CD8-positive, alpha-beta T cell (primary cell): ENCODE measurements at regions of chr19 and their contacts with region 1.

Region 1: DNA sequence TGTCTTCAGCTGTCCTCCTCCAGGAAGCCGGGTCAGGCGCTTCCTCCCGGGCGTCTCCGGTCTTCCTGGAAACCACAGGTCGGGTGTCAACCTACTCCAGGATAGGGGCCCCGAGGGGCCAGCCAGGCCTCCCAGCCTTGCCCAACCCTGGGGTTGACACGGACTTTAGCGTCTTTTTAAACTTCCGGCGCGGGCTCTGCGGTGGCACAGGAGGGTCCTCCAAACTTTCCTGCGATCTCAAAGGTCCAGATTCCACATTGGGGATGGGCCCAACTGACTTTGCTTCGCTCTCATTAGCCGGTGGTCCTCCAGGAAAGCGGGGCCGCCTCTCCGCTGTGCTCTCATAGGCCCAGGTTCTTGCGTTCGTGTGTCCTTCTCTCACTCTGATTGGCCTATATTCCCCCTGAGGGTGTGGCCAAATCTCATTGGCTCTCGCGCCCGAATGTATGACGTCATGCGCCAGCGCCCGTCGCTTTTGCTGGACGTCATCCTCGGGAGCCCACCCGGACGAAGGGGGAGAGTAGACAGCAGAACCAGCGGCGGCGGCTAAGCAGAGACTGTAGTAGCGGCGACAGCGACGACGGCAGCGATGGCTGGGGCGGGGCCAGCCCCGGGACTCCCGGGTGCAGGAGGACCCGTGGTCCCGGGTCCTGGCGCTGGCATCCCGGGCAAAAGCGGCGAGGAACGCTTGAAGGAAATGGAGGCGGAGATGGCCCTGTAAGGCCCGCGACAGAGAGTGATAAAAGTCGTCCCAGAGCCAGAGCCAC is at the start of gene RBM42:
- DNase-seq: peak; percentile 94 to 99 (median 98)
- ATAC-seq: peak; percentile 99
- H3K4me3 ChIP-seq: peak within 1 kb of the TSS; percentile 90 to 93
- H3K4me3 Mint-ChIP-seq: peak within 1 kb of the TSS; percentile 96
- H3K27ac ChIP-seq: peak within 1 kb of the TSS; percentile 90 to 91
- H3K27ac Mint-ChIP-seq: peak within 1 kb of the TSS; percentile 96
- H3K4me1 ChIP-seq: peaks cover 17% of the 10 kb centered on the region
- H3K4me1 Mint-ChIP-seq: peaks cover 24% of the 10 kb centered on the region
- H3K27me3 ChIP-seq: no peaks in the 10 kb centered on the region
- H3K27me3 Mint-ChIP-seq: no peaks in the 10 kb centered on the region
- CTCF ChIP-seq: no peak
- total RNA-seq, gene RBM42: 49.9 to 51.3 TPM

Region 2: DNA sequence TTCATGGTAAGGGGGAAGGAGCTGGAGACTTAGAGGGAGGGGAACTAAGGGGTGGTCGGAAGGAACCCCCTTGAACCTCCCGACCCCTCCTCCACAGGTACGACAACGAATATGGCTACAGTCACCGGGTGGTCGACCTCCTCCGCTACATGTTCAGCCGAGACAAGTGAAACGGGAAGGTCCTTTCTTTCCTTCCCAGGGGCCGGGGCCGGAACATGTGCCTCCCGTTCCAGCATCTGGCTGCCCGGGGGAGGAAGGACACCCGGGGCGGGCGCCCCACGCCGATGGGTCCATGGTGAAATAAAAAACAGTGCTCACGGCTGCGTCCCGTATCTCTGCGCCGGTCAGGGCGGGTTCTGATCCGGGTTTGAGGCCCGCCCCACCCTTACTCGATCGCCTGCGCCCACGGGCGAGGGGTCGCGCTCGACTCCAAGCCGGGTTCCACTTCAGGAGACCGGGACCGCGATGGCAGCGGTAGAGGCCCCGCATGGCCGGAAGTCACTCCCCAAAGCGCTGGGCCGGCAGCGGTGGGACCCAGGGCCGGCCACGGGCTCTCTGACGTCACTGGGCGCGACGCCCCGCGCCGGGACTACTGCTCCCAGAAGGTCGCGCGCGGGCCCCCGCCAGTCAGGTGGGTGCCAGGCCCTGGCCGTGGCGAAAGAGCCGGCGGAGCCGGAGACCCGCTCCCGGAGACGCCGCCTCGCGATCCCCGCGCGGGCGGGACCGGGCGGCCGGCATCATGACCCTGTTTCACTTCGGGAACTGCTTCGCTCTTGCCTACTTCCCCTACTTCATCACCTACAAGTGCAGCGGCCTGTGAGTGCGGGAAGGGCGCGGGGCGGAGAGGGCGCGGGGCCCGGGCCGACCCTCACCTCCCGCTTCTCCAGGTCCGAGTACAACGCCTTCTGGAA is 83.5 kb before region 1 on chr19 and contains the start of gene TMEM147:
- CTCF ChIA-PET with region 1: no interaction called
- POLR2A ChIA-PET with region 1: no interaction called
- intact Hi-C with region 1: loop called (anchors 1 to 5 kb)
- DNase-seq: peak; percentile 44 to 88 (median 79)
- ATAC-seq: peak; percentile 75
- H3K4me3 ChIP-seq: peak within 1 kb of the TSS; percentile 75 to 81
- H3K4me3 Mint-ChIP-seq: peak within 1 kb of the TSS; percentile 88
- H3K27ac ChIP-seq: peak within 1 kb of the TSS; percentile 79 to 85
- H3K27ac Mint-ChIP-seq: peak within 1 kb of the TSS; percentile 90
- H3K4me1 ChIP-seq: peaks cover 21% of the 10 kb centered on the region
- H3K4me1 Mint-ChIP-seq: peaks cover 35% of the 10 kb centered on the region
- H3K27me3 ChIP-seq: no peaks in the 10 kb centered on the region
- H3K27me3 Mint-ChIP-seq: no peaks in the 10 kb centered on the region
- CTCF ChIP-seq: no peak
- total RNA-seq, gene TMEM147: 22.3 to 27.2 TPM

Region 3: GRCh38 chr19:35612559-35613321 is 16.0 kb before region 1 on chr19 and contains the start of gene HAUS5:
- CTCF ChIA-PET with region 1: no interaction called
- POLR2A ChIA-PET with region 1: interaction called, 3 read pairs
- intact Hi-C with region 1: loop called (anchors 1 kb)
- DNase-seq: peak; percentile 90 to 99 (median 96)
- ATAC-seq: peak; percentile 91
- H3K4me3 ChIP-seq: peak within 1 kb of the TSS; percentile 87 to 91
- H3K4me3 Mint-ChIP-seq: peak within 1 kb of the TSS; percentile 86
- H3K27ac ChIP-seq: peak within 1 kb of the TSS; percentile 78 to 81
- H3K27ac Mint-ChIP-seq: peak within 1 kb of the TSS; percentile 94
- H3K4me1 ChIP-seq: peaks cover 26% of the 10 kb centered on the region
- H3K4me1 Mint-ChIP-seq: peaks cover 35% of the 10 kb centered on the region
- H3K27me3 ChIP-seq: no peaks in the 10 kb centered on the region
- H3K27me3 Mint-ChIP-seq: no peaks in the 10 kb centered on the region
- CTCF ChIP-seq: no peak
- total RNA-seq, gene HAUS5: 24.0 to 27.7 TPM

Region 4: DNA sequence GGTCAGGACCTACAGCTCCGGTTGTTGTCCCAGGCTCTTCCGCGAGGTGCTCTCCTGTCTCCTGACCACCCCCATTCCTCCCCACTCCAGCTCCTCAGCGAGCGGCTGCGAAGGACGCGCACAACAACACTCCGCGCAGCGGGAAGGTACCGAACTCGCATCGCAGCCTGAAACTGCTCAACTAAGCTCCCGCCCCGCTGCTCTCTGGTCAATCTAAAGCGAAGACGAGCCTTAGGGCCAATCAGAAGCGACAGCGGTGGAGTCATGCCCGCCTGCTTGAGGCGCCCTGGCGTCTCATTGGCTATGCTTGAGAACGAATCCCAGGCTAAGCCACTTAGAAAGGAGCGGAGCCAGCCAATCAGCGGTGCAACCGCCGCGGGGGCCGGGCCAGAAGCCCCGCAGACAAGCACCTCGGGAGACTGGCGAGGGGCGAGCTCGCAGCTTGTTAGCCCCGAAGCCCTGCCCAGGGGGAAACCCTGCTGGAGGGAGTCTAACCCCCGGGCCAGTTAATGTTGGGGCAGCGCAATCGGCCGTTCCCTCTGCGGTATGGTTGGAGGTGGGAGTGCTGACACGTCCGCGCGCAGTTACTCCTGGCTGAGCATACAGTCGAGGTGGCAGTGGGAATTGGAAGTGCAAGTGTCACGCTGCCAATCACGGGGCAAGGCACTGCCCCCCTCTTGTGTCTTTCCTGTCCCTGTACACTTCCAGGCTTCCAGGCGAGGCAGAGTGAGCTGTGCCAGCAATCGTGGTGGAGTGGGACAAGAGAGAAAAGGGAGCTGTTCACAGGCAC is 73.7 kb after region 1 on chr19:
- CTCF ChIA-PET with region 1: no interaction called
- POLR2A ChIA-PET with region 1: interaction called, 3 read pairs
- intact Hi-C with region 1: loop called (anchors 1 to 5 kb)
- DNase-seq: peak; percentile 79 to 98 (median 92)
- ATAC-seq: peak; percentile 99
- H3K4me3 ChIP-seq: peak overlapping the region; percentile 71 to 79
- H3K4me3 Mint-ChIP-seq: peak overlapping the region; percentile 92
- H3K27ac ChIP-seq: peak overlapping the region in 1 of 2 experiments; percentile 41
- H3K27ac Mint-ChIP-seq: peak overlapping the region; percentile 92
- H3K4me1 ChIP-seq: peaks cover 4% of the 10 kb centered on the region
- H3K4me1 Mint-ChIP-seq: peaks cover 7% of the 10 kb centered on the region
- H3K27me3 ChIP-seq: no peaks in the 10 kb centered on the region
- H3K27me3 Mint-ChIP-seq: no peaks in the 10 kb centered on the region
- CTCF ChIP-seq: no peak

Region 5: DNA sequence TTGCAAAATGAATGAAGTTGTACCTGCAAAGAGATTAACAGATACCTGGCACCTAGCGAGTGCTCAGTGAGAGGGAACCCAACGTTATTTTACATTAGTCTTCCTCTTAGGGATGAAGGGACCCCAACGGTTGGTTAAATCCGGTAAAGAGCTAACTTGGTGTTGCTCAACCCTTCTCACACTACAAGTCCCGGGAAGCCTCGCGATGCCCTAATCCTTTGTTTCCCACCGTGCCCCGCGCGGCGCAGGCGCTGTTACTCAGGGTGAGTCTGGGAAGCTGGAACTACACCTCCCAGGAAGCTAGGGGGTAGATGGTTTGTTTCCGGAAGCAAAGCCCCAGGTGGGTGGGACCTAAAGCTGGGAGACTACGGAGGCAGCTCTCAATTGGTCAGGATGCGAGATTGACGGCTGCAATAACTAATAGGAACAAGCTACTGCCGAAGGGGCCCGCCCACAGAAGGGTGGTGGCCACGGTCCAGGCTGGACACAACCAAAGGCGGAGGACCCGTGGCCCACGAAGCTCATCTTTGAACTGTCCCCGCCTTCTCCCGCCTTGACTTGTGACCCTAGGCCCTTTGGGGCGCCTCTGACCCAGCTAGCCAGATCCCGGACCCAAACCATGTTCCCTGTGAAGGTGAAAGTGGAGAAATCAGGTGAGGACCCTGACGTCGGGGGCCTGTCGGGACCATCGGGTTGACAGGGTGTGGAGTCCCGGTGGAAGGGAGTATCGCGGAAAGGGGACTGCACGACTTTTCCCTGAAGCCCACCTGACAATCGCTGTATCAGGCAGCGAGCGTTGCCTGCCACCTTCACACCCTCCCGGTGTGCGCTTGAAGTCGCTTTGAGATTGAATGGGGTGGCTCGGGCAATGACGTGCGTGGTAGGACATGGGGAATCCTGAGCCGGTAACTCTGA is 119.6 kb after region 1 on chr19 and contains the start of gene LIN37:
- CTCF ChIA-PET with region 1: no interaction called
- POLR2A ChIA-PET with region 1: no interaction called
- intact Hi-C with region 1: loop called in 1 of 2 experiments (anchors 2 kb)
- DNase-seq: peak; percentile 97 to 100 (median 98)
- ATAC-seq: peak; percentile 72
- H3K4me3 ChIP-seq: peak within 1 kb of the TSS; percentile 84 to 99
- H3K4me3 Mint-ChIP-seq: peak within 1 kb of the TSS; percentile 98
- H3K27ac ChIP-seq: peak within 1 kb of the TSS; percentile 71 to 84
- H3K27ac Mint-ChIP-seq: peak within 1 kb of the TSS; percentile 95
- H3K4me1 ChIP-seq: peaks cover 41% of the 10 kb centered on the region
- H3K4me1 Mint-ChIP-seq: peaks cover 44% of the 10 kb centered on the region
- H3K27me3 ChIP-seq: no peaks in the 10 kb centered on the region
- H3K27me3 Mint-ChIP-seq: no peaks in the 10 kb centered on the region
- CTCF ChIP-seq: no peak
- total RNA-seq, gene LIN37: 5.5 to 9.3 TPM

Region 6: DNA sequence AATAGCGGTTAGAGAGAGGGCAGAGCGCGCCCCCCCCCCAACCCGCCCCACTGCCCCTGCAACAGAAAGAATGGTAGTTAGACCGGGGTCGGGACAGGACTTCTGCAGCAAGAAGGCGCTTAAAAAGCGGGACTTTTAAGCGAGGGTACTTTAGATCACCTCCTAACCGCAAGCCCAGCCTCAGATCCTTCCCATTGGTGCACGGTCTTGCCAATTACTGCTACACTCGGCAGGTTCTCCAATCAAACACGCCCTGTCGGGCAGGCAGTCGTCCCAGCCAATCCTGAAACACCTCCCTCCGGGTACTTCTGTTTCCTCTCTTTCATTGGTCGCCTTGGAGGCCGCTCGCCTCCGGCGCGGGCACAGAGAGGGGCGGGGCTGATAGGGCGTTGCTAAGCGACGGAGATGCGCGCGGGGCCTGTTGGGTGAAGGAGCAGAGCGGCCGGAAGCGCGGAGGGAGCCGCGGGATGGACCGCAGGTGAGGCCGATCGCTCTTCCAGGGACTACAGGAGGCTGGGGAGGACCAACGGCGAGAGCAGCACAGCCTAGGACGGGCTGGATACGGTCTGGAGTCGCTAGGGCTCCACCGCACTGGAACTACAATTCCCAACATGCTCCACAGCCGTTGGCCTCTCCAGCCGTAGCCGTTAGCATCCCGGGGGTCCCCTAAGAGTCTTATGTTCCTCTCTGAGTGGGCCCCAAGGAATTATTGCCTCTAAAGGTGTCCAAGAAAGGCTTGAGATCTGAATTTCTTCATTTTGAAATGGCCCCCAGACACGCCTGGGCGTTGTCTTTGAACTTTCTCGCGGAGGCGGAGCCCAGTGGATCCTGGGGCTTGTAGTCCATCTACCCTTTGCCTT is 129.2 kb after region 1 on chr19 and contains the start of gene PROSER3:
- CTCF ChIA-PET with region 1: no interaction called
- POLR2A ChIA-PET with region 1: no interaction called
- intact Hi-C with region 1: loop called in 1 of 2 experiments (anchors 1 kb)
- DNase-seq: peak; percentile 96 to 99 (median 98)
- ATAC-seq: peak; percentile 95
- H3K4me3 ChIP-seq: peak within 1 kb of the TSS; percentile 98 to 100
- H3K4me3 Mint-ChIP-seq: peak within 1 kb of the TSS; percentile 96
- H3K27ac ChIP-seq: peak within 1 kb of the TSS; percentile 95 to 97
- H3K27ac Mint-ChIP-seq: peak within 1 kb of the TSS; percentile 97
- H3K4me1 ChIP-seq: peaks cover 25% of the 10 kb centered on the region
- H3K4me1 Mint-ChIP-seq: peaks cover 34% of the 10 kb centered on the region
- H3K27me3 ChIP-seq: no peaks in the 10 kb centered on the region
- H3K27me3 Mint-ChIP-seq: peaks cover 9% of the 10 kb centered on the region
- CTCF ChIP-seq: no peak
- total RNA-seq, gene PROSER3: 17.3 to 19.5 TPM

Region 7: DNA sequence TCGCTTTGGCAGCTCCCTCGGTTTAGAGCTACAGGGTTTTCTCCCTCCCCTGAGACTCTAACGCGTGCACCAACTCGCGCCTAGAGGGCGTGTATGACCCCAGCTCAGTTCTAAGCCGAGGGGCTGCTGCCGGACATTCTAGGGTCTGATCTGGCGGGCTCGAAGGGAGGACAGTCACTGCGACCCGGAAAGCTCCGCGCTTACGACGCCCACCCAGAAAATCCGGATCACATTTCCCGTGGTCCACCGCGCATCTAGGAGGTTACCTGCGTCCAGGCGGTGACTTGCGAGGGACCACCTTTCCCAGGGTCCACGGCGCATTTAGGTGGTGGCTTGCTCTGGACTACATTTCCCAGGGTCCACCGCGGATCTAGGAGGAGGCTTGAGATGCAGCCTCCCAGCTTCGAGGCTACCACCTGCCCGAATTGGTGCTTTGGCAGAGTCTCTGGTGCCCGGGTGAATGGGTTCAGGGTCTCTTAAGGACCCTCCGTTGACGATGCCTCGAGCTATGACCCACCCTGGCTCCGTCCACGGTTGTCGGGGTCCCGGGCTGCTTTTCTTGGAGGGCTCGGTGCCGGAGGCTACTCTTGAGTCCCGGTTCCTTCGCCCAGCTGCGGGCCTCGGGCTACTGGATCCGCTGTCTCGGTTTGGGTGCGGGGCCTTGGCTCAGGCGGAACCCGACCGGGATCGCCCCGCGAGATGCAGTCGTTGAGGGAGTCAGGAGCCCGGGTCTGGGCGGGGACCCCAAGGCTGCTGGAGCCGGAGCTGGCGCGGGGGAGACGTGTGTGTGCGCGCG is 616.7 kb after region 1 on chr19:
- CTCF ChIA-PET with region 1: no interaction called
- POLR2A ChIA-PET with region 1: no interaction called
- intact Hi-C with region 1: no loop called
- DNase-seq: no peak
- ATAC-seq: no peak
- H3K4me3 ChIP-seq: no peak overlapping the region
- H3K4me3 Mint-ChIP-seq: no peak overlapping the region
- H3K27ac ChIP-seq: no peak overlapping the region
- H3K27ac Mint-ChIP-seq: no peak overlapping the region
- H3K4me1 ChIP-seq: no peaks in the 10 kb centered on the region
- H3K4me1 Mint-ChIP-seq: peaks cover 5% of the 10 kb centered on the region
- H3K27me3 ChIP-seq: no peaks in the 10 kb centered on the region
- H3K27me3 Mint-ChIP-seq: peaks cover 4% of the 10 kb centered on the region
- CTCF ChIP-seq: no peak